KBM-7 (cell line): ENCODE measurements at regions of chr4 and their contacts with region 1.

Region 1: DNA sequence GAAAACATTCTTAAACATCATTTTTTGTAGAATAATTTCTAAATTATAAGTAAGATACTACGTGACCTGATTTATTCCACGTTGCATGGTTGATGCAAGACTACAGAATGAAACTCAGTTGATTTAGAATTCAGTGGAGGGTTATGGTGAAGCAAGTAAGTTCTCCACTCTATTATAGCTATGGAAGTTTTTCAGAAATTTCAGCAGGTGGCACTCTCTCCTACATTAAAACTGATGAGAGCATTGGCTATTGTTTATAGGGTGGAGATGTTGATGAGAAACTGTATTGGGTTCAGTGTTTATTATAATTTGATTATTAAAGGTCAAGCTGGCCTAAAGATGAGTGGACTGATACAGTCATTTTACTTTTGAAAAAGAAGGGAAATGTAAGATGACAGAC is 88.0 kb downstream of the FNIP2 start:
- DNase-seq: peak; percentile 38

Region 2: GRCh38 chr4:159150821-159151390 is 294.1 kb after region 1 on chr4:
- in situ Hi-C with region 1: loop called (anchors 25 kb)
- DNase-seq: no peak

Region 3: DNA sequence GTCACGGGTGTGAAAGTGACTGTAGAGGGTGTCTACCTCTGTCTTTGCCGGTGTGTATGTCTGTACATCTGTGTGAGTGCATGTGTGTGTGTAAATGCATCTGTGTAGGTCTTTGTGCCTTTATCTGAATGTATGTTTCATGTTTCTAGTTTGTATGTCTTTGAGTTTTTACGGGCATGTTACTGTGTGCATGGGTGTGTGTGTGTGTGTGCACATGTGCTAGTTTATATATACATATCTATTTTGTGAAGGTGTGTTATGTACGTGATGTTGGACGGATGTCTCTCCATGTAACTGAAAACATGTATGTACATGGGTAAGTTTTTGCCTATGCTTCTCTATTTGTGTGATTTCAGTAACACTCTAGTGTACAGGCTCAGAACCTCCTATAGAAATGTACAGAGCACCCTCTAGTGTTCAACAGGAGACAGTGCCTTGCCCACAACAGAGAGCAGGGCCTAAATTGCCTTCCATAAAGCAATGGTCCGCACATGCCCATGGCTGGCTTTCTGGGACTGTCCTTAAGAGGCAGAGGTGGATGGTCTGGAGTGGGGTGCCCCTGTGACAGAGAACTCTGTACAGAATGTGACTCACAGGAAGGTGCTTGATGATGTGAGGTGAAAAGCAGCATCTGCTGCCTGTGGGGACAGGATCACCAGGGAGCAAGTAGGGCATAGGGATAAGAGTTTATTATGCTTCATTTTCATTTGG is 589.6 kb after region 1 on chr4:
- in situ Hi-C with region 1: loop called (anchors 25 kb)
- DNase-seq: peak; percentile 66